Activated naive CD8-positive, alpha-beta T cell treated with anti-CD3 and anti-CD28 coated beads, Interleukin-2, amount 10 ng/mL, durations not matched to agents 7 days and 5 days (primary cell): ENCODE measurements at regions of chr1 and their contacts with region 1.

Region 1: GRCh38 chr1:42846257-42847110 is at the start of gene ZNF691:
- DNase-seq: peak; percentile 79
- ATAC-seq: peak; percentile 98
- H3K4me3 Mint-ChIP-seq: peak within 1 kb of the TSS; percentile 98
- H3K27ac Mint-ChIP-seq: peak within 1 kb of the TSS; percentile 87
- H3K4me1 Mint-ChIP-seq: peaks cover 27% of the 10 kb centered on the region
- H3K27me3 Mint-ChIP-seq: no peaks in the 10 kb centered on the region
- total RNA-seq, gene ZNF691: 12.2 to 14.1 TPM

Region 2: DNA sequence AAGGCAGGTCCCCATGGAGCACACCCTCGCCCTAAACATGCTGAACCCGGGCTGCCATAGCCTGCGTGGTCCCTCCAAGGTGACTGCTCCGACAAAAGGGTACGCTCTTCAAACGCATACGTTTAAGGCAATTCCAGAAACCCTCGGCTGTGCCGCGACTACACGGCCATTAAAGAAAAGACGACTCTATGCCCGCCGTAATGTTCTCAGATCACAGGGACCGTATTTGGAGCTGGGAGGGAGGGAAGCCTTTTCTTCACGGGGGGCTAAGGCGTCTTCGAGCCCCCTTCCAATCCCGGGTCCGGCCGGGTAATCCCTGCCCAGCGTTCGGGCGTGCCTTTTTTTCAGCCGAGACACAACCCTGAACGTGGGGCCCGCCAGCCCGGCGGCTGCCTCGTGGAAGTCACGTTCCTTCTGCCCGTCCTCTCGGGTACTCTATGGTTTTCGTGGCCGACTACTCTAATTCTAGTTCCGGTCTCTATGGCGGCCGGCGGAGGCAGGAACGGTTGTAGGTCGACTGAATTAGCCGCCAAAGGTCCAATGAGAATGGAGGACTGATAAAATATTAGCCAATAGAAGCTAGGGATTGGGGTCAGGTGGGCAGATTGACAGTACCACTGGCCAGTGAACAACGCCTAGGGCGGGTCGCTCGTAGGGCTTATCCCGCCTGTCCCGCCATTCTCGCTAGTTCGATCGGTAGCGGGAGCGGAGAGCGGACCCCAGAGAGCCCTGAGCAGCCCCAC is 164.6 kb before region 1 on chr1 and contains the start of gene YBX1:
- POLR2A ChIA-PET with region 1: interaction called, 11 read pairs
- DNase-seq: peak; percentile 92
- ATAC-seq: peak; percentile 96
- H3K4me3 Mint-ChIP-seq: peak within 1 kb of the TSS; percentile 95
- H3K27ac Mint-ChIP-seq: peak within 1 kb of the TSS; percentile 97
- H3K4me1 Mint-ChIP-seq: peaks cover 39% of the 10 kb centered on the region
- H3K27me3 Mint-ChIP-seq: no peaks in the 10 kb centered on the region
- total RNA-seq, gene YBX1: 529 to 531 TPM

Region 3: DNA sequence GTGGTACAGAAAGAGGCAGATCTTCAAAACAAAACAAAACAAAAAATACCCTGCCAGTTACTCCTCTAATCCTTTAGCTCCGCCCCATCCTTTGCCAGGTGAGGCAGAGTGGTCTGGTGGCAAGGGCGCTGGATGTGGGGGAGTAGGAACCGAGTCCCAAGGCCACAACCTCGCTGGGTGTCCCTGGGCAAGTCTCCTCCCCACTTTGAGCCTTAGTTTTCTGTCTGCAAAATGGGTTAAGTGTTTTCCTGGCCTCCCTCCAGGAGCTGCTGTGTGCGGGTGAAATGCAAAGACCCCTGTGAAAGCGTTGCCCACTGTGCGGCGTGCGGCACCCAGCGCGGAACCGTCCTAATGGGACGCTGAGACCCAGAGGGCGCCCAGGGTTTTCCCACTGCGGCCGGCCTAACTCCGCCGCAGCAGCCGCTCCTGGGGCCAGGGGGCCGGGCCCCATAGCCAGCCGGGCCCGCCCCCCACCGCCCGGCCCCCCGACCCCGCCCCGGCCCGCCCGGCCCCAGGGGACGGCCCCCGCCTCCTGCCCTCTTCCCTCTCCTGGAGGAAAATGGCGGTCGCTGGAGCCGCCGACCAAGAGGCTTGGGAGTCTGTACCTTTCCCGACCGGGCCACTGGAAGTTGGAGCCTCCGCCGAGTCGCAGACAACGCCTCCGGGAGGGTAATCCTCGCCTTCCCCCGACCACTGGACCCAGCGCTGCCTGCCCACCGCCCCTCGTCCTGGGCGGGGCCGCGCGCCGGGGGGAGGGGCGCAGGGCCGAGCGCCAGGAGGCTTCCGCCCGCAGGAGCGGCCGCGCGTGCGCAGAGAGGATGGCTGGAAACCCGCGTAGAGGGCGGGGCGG is 29.7 kb before region 1 on chr1 and contains the starts of genes ERMAP and SVBP:
- POLR2A ChIA-PET with region 1: interaction called, 25 read pairs
- DNase-seq: peak; percentile 99
- ATAC-seq: peak; percentile 87
- H3K4me3 Mint-ChIP-seq: peak within 1 kb of the TSS; percentile 86
- H3K27ac Mint-ChIP-seq: peak within 1 kb of the TSS; percentile 87
- H3K4me1 Mint-ChIP-seq: peaks cover 20% of the 10 kb centered on the region
- H3K27me3 Mint-ChIP-seq: peaks cover 2% of the 10 kb centered on the region
- total RNA-seq, gene ERMAP: 3.9 to 5.0 TPM
- total RNA-seq, gene SVBP: 15.8 to 18.1 TPM

Region 4: GRCh38 chr1:42958488-42959319 is 112.2 kb after region 1 on chr1 and contains the start of gene SLC2A1:
- POLR2A ChIA-PET with region 1: no interaction called
- DNase-seq: peak; percentile 94
- ATAC-seq: peak; percentile 87
- H3K4me3 Mint-ChIP-seq: peak within 1 kb of the TSS; percentile 97
- H3K27ac Mint-ChIP-seq: peak within 1 kb of the TSS; percentile 96
- H3K4me1 Mint-ChIP-seq: peaks cover 40% of the 10 kb centered on the region
- H3K27me3 Mint-ChIP-seq: no peaks in the 10 kb centered on the region
- total RNA-seq, gene SLC2A1: 80.8 to 82.3 TPM